Right ventricle myocardium superior (tissue), 1 donor: ENCODE measurements at regions of chr6 and their contacts with region 1.

Region 1: GRCh38 chr6:55953335-55953734 is 77.9 kb upstream of the BMP5 start:
- DNase-seq: no peak
- ATAC-seq: peak; percentile 87

Region 2: GRCh38 chr6:55445648-55446204 is 507.6 kb before region 1 on chr6:
- intact Hi-C with region 1: loop called (anchors 5 kb)
- DNase-seq: no peak
- ATAC-seq: no peak

Region 3: GRCh38 chr6:55886185-55886836 is 67.0 kb before region 1 on chr6:
- intact Hi-C with region 1: no loop called
- DNase-seq: no peak
- ATAC-seq: no peak

Region 4: GRCh38 chr6:56046576-56046975 is 93.2 kb after region 1 on chr6:
- intact Hi-C with region 1: no loop called
- DNase-seq: peak; percentile 52
- ATAC-seq: no peak

Region 5: DNA sequence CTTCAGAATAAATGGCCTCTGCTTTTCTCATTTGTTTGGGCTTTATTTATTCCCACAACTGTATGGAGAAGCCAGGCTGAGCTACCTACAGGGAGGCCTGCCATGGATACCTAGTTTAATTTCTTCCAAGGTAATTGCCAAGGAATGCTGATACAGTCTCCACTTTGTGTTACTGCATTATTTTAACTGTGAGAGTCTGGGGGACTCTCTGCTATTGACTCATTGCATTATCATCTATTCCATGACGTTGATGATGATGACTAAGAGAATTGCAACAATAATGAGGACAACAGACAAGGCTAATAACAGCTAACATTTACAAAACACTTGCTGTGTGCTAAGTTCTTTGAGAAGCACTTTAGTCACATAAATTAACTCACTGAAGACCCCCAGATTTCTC is 382.4 kb after region 1 on chr6:
- intact Hi-C with region 1: no loop called
- DNase-seq: no peak
- ATAC-seq: no peak